Breast epithelium (tissue), 4 donors: ENCODE measurements at regions of chr1 and their contacts with region 1.

Region 1: DNA sequence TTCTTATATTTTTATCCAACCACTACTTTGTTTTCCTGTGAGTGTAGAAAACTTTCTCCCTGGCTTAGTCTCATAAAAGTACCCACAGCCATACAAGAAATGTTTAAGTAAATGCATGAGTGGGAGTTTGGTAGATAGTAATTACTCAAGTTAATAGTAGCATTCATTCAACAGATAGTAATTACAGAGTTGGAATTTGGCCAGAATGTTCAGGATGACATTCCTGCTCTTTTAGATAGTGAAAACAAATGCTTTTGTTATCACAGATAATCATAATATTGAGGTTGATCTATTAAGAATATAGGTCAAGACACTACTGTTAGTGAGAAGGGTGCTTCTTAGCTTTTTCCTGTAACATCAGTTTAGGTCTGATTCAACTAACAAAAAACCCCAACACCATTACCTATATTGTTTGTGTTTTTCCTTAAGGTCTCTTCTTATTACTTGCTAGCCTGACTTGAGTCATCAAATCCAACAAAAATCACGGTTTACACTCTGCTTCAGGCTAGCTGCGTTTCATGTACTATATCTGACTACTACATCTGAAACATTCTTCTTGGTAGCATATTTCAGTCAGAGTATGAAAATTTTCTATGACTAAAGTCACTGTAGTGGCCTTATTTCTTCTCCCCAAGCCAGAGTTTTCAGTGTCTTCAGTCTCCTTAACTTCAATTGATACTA is 163.7 kb downstream of the HS2ST1 start:
- DNase-seq: no peak
- H3K4me3 ChIP-seq: no peak overlapping the region
- H3K27ac ChIP-seq: no peak overlapping the region
- H3K4me1 ChIP-seq: no peaks in the 10 kb centered on the region
- H3K27me3 ChIP-seq: no peaks in the 10 kb centered on the region
- CTCF ChIP-seq: no peak
- POLR2A ChIP-seq: no peak

Region 2: DNA sequence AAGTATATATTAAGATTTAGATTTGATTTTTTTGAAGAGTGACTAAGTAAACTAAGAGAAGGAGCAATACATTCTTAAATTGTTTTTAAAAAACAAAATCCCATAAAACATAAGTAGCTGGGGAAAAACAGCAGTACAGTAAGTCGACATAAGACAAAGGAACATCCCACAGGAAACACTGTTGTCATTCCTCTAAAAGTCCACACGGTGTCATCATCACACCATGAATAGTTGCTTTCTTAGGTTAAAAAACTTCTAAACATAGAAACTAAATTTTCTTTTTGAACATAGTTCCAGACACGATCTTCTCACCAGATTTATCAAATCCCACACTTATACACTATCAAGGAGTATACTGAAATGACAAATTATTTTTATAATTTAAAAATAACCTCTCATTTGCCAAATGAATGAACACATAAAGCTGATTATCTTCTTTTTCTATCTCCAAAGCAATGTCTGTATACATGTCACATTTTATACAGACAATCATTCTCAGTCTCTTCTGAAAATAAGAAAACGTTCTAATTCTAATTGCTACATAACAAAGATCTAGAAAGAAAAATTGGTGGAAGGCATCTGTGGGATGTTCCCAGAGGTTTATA is 697.7 kb before region 1 on chr1:
- intact Hi-C with region 1: loop called (anchors 5 kb)
- DNase-seq: no peak
- H3K4me3 ChIP-seq: no peak overlapping the region
- H3K27ac ChIP-seq: no peak overlapping the region
- H3K4me1 ChIP-seq: no peaks in the 10 kb centered on the region
- H3K27me3 ChIP-seq: no peaks in the 10 kb centered on the region
- CTCF ChIP-seq: peak; percentile 47 to 88 (median 80)
- POLR2A ChIP-seq: no peak

Region 3: GRCh38 chr1:86650065-86650464 is 428.0 kb before region 1 on chr1:
- intact Hi-C with region 1: loop called (anchors 5 kb)
- DNase-seq: no peak
- H3K4me3 ChIP-seq: no peak overlapping the region
- H3K27ac ChIP-seq: no peak overlapping the region
- H3K4me1 ChIP-seq: no peaks in the 10 kb centered on the region
- H3K27me3 ChIP-seq: no peaks in the 10 kb centered on the region
- CTCF ChIP-seq: no peak
- POLR2A ChIP-seq: no peak

Region 4: DNA sequence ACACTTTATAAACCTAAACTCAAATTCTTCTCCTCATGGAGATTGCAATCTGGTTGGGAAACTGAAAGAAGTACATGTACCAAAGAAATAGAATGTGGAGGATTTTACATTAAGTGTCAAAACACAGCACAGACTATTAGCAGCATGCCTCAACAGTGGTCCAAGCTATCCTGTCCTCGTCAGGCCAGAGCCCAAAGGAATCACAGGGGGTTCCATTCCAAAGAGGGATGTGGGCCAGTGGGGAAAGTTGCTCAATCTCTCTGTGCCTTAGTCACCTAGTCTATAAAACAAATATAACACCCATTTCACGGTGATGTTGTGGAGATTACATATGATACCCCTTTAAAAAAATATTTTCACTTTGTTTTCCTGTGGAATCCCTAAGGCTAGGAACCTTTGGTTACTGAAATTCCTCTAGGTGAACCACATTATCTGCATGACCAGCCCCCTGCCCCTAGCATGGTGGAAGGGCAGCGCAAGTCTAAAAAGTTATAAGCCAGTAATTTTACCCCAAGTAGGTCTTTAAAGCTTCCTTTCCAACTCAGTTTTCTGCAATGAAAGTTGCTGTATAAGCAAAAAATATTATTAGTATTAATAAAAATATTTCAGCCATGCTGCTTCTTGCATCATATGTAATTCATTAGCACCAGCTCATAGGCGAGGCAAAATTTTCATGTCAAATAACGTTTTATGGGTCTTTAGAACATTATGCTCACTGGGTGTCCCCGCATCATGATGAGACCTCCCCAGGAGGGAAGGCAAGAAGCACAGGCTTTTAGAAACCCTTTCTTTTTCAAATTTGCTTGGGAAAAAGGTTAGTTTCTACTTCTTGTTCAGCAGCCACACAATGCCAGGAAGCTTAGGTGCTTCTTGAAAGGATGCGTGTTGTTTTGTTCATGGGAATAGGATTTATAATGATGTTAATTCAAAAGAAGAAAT is 1057.2 kb after region 1 on chr1:
- intact Hi-C with region 1: no loop called
- DNase-seq: no peak
- H3K4me3 ChIP-seq: no peak overlapping the region
- H3K27ac ChIP-seq: no peak overlapping the region
- H3K4me1 ChIP-seq: no peaks in the 10 kb centered on the region
- H3K27me3 ChIP-seq: no peaks in the 10 kb centered on the region
- CTCF ChIP-seq: no peak
- POLR2A ChIP-seq: no peak